ENCODE measurements at regions of chr1 and their contacts with region 1.

Region 1: GRCh38 chr1:115337633-115338456 is at the start of gene NGF:
- DNase-seq: peak; percentile 77 to 85 (median 80)
- H3K4me3 ChIP-seq: peak within 1 kb of the TSS; percentile 84
- H3K27ac ChIP-seq: peak within 1 kb of the TSS; percentile 16 to 82
- H3K4me1 ChIP-seq: peaks cover 23% of the 10 kb centered on the region
- H3K27me3 ChIP-seq: no peaks in the 10 kb centered on the region
- CTCF ChIP-seq: peak in 1 of 3 donors; percentile 16
- EP300 ChIP-seq: no peak
- POLR2A ChIP-seq: peak; percentile 78
- total RNA-seq, gene NGF: 3.0 to 43.4 (median 14.1) TPM

Region 2: GRCh38 chr1:115210302-115210711 is 127.5 kb before region 1 on chr1:
- intact Hi-C with region 1: loop called in 1 of 4 experiments (anchors 10 kb)
- DNase-seq: no peak
- H3K4me3 ChIP-seq: no peak overlapping the region
- H3K27ac ChIP-seq: no peak overlapping the region
- H3K4me1 ChIP-seq: peaks cover 9% of the 10 kb centered on the region
- H3K27me3 ChIP-seq: no peaks in the 10 kb centered on the region
- CTCF ChIP-seq: no peak
- EP300 ChIP-seq: no peak
- POLR2A ChIP-seq: no peak

Region 3: DNA sequence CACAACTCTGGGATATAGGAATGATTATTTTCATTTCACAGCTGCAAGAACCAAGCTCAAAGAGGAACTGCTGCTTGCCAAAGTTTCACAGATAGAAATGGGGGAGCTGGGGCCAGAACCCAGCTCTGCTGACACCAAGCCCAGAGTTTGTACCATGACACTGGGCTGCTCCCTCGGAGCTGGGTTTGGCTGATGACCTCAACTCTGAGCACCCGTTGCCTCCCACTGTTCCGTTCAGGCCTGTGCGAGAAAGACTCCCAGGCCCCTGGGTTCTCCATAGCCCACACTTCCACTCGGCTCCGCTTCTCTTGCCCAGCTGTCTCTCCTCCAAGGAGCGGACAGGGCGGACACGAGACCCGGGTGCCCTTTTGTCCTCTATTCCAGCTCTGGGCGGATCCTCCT is 55.0 kb before region 1 on chr1:
- intact Hi-C with region 1: loop called in 1 of 4 experiments (anchors 10 kb)
- DNase-seq: peak; percentile 87 to 94 (median 90)
- H3K4me3 ChIP-seq: no peak overlapping the region
- H3K27ac ChIP-seq: peak overlapping the region; percentile 92 to 97
- H3K4me1 ChIP-seq: peaks cover 22% of the 10 kb centered on the region
- H3K27me3 ChIP-seq: no peaks in the 10 kb centered on the region
- CTCF ChIP-seq: no peak
- EP300 ChIP-seq: no peak
- POLR2A ChIP-seq: peak; percentile 44

Region 4: DNA sequence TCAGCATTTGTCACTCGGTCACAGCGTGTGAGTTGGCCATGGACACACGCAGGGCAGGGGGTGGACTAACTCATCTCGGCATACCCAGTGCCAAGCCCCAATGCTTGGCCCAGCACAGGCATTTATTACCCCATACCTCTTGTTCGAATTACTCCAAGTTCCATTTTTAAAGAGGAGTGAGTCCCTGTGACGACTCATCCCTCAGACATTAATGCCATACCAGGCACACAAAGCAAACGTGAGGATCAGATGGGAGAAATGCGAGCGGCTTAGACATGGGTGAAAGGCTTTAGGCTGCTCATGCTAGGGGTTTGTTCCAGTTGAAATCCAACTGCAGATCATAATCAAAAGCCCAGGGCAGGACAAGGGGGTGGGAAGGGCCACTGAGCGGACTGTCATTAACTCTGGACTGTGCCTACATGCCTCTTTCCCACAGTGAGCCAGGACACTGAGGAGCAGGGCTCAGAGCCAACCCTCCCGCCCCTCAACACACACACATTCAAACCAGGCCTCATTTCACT is 118.7 kb after region 1 on chr1:
- intact Hi-C with region 1: loop called in 1 of 4 experiments (anchors 10 kb)
- DNase-seq: no peak
- H3K4me3 ChIP-seq: no peak overlapping the region
- H3K27ac ChIP-seq: no peak overlapping the region
- H3K4me1 ChIP-seq: peaks cover 8% of the 10 kb centered on the region
- H3K27me3 ChIP-seq: no peaks in the 10 kb centered on the region
- CTCF ChIP-seq: no peak
- EP300 ChIP-seq: no peak
- POLR2A ChIP-seq: no peak

Measured in ovary (tissue), 10 donors.